ENCODE measurements at regions of chr16 and their contacts with region 1.

Region 1: DNA sequence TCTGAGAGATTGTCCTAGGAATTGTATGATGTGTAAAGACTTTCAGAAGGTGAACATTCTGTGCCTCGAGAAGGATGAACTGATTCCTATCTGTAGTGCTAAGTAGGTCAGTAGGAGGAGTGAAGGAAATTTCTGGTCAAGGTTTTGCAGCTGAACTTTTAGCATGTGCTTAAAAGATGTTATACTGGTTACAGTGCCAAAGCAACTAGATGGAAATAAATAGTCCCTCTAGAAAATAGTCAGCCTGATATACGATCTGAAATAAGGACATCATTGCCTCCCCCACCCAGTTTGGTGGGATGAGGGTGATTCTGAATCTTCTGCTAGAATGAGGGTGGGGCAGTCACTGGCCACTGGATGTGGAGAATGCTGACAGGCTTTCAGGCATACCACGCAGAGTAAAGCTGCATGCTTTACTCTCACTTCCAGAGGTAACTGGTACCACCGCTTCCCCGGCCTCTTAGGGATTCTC is 57.2 kb upstream of the VPS4A start:
- DNase-seq: no peak
- ATAC-seq: peak; percentile 20 to 85 (median 80)
- H3K4me3 ChIP-seq: no peak overlapping the region
- H3K27ac ChIP-seq: peak overlapping the region in 3 of 12 donors; percentile 8 to 60 (median 34)
- H3K4me1 ChIP-seq: peaks cover 0 to 13% (median 0%) of the 10 kb centered on the region in 12 donors
- H3K27me3 ChIP-seq: no peaks in the 10 kb centered on the region
- CTCF ChIP-seq: no peak
- POLR2A ChIP-seq: no peak

Region 2: DNA sequence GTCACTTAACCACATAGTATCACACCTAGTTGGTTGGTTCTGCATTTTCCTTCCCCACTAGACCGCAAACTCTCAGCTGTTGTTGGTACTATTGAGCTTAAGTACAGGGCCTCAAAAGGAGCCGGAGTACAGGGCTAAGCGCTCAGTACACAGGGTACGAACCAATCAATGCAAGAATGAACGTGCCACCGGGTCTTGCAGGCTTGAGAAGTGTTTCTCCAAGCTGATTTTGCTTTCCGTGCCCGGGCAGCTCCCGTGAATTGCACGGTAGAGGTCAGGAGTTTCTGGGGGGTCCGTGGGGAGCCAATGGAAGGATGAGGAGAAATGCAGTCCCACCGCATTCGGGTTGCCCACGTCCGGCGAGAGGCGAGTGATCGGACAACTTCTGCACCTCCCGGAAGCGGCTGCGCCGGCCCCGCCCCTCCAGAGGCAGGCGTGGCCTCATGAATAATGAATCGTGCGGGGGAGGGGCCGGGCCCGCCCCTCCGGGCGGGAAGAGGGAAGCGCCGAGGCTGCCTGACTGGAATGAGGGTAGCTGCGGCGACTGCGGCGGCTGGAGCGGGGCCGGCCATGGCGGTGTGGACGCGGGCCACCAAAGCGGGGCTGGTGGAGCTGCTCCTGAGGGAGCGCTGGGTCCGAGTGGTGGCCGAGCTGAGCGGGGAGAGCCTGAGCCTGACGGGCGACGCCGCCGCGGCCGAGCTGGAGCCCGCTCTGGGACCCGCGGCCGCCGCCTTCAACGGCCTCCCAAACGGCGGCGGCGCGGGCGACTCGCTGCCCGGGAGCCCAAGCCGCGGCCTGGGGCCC is 67.1 kb before region 1 on chr16 and contains the start of gene SNTB2:
- intact Hi-C with region 1: loop called in 1 of 10 experiments (anchors 10 kb)
- DNase-seq: peak; percentile 92 to 97 (median 94)
- ATAC-seq: peak; percentile 97 to 99 (median 98)
- H3K4me3 ChIP-seq: peak within 1 kb of the TSS; percentile 59 to 91 (median 78)
- H3K27ac ChIP-seq: peak within 1 kb of the TSS; percentile 71 to 90 (median 84)
- H3K4me1 ChIP-seq: peaks cover 4 to 47% (median 18%) of the 10 kb centered on the region in 12 donors
- H3K27me3 ChIP-seq: no peaks in the 10 kb centered on the region
- CTCF ChIP-seq: no peak
- POLR2A ChIP-seq: peak; percentile 30 to 97
- total RNA-seq, gene SNTB2: 8.6 to 28.5 (median 13.2) TPM

Region 3: GRCh38 chr16:69223882-69224281 is 30.0 kb before region 1 on chr16:
- intact Hi-C with region 1: no loop called
- DNase-seq: no peak
- ATAC-seq: no peak
- H3K4me3 ChIP-seq: no peak overlapping the region
- H3K27ac ChIP-seq: peak overlapping the region in 1 of 12 donors; percentile 51
- H3K4me1 ChIP-seq: peaks cover 0 to 12% (median 1%) of the 10 kb centered on the region in 12 donors
- H3K27me3 ChIP-seq: no peaks in the 10 kb centered on the region
- CTCF ChIP-seq: no peak
- POLR2A ChIP-seq: no peak